Psoas muscle (tissue), 8 donors: ENCODE measurements at regions of chr5 and their contacts with region 1.

Region 1: GRCh38 chr5:39520232-39520572 is 95.4 kb upstream of the DAB2 start:
- DNase-seq: no peak
- ATAC-seq: peak in 1 of 4 donors; percentile 57
- H3K4me3 ChIP-seq: no peak overlapping the region
- H3K27ac ChIP-seq: peak overlapping the region; percentile 66
- H3K4me1 ChIP-seq: peaks cover 13% of the 10 kb centered on the region
- H3K27me3 ChIP-seq: no peaks in the 10 kb centered on the region
- CTCF ChIP-seq: no peak

Region 2: GRCh38 chr5:39411051-39411450 is 109.2 kb before region 1 on chr5:
- intact Hi-C with region 1: loop called in 1 of 2 experiments (anchors 10 kb)
- DNase-seq: no peak
- ATAC-seq: peak in 3 of 4 donors; percentile 23 to 41 (median 23)
- H3K4me3 ChIP-seq: no peak overlapping the region
- H3K27ac ChIP-seq: peak overlapping the region; percentile 50
- H3K4me1 ChIP-seq: peaks cover 24% of the 10 kb centered on the region
- H3K27me3 ChIP-seq: no peaks in the 10 kb centered on the region
- CTCF ChIP-seq: no peak

Region 3: GRCh38 chr5:39424736-39425637 is 95.2 kb before region 1 on chr5 and contains the start of gene DAB2:
- intact Hi-C with region 1: no loop called
- DNase-seq: peak; percentile 89 to 90
- ATAC-seq: peak; percentile 73 to 84 (median 80)
- H3K4me3 ChIP-seq: peak within 1 kb of the TSS; percentile 72
- H3K27ac ChIP-seq: peak within 1 kb of the TSS; percentile 63
- H3K4me1 ChIP-seq: peaks cover 18% of the 10 kb centered on the region
- H3K27me3 ChIP-seq: peaks cover 0 to 12% (median 3%) of the 10 kb centered on the region in 3 donors
- CTCF ChIP-seq: peak; percentile 42
- total RNA-seq, gene DAB2: 13.5 to 37.1 (median 21.0) TPM